Uterus (tissue), 4 donors: ENCODE measurements at regions of chr17 and their contacts with region 1.

Region 1: DNA sequence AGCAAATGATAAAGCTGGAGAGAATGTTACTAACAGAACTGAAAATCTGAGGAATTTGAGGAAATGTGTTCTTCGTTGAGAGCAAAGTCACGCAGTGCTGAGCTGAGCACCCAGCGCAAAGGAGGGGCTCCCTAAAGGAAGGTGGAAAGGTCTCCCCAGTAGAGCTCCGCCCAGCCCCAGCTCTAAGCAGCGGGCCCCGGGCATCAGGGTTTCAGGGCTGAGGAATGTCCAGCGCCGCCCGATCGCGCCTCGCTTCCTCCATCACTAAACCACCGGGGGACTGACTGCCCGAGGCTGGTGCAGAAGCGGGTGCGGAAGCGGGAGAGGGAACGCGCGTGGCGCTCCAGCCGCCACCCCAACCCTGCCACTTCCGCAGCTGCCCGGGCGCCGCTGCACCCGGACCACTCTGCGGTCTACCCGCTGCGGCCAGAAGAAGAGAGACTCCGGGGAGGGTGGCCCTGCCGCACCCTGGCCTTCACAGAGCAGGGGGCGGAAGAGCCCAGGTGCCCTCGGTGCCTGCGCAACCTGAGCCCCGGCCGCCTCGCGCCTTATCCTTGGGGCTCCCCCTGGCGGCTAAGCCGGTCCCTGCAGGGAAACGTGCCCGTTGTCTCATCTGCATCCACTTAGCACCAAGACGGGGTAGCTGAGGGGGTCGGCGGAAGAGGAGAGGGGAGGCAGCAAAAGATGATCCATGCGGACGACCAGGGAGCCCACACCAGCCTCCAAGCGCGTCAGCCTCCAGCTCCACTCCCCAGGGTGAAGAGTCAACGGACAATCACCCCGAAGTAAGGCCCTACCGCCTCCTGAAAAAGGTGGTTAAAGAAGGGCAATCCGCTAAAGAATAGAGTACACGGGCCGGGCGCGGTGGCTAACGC is 12.4 kb upstream of the GUCY2D start:
- DNase-seq: peak; percentile 82 to 87
- H3K4me3 ChIP-seq: peak overlapping the region; percentile 41 to 50
- H3K27ac ChIP-seq: peak overlapping the region; percentile 48 to 63
- H3K4me1 ChIP-seq: no peaks in the 10 kb centered on the region
- H3K27me3 ChIP-seq: no peaks in the 10 kb centered on the region
- CTCF ChIP-seq: peak; percentile 91 to 97 (median 94)
- POLR2A ChIP-seq: peak in 1 of 2 donors; percentile 19

Region 2: DNA sequence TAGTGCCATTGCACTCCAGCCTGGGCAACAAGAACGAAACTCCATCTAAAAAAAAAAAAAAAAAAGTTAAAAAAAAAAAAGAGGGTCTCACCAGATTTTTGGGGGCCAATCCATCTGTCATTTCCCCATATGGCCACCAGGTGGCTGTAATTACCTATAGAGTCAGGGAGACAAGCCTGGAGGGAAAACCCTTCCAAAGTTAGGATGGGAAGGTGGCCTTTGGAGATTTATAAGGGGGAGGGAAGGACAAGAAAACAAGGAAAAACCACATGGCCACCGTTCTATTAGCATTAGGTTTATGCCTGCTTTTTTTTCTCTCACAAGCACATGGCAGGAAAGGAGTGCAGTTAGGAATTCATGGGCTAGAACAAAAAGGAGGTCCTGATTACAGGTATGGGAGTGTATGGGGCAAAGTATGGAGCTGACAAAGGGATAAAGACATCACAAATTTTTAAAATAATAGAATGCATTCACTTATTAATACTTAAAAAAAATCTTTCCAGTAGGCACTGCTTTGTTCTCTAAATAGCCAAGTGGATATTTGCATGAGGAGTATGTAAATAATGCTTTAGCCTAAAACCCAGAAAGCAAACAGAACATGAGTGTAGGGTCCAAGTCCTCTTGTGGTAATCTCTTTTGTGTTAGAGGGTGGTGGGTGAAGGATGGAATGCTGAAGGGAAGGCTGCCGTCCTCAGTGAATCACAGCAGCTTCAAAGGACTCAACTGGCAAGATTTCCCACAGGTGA is 127.2 kb before region 1 on chr17:
- intact Hi-C with region 1: loop called (anchors 10 kb)
- DNase-seq: peak; percentile 55 to 71
- H3K4me3 ChIP-seq: no peak overlapping the region
- H3K27ac ChIP-seq: no peak overlapping the region
- H3K4me1 ChIP-seq: peaks cover 0 to 9% of the 10 kb centered on the region in 2 donors
- H3K27me3 ChIP-seq: no peaks in the 10 kb centered on the region
- CTCF ChIP-seq: peak; percentile 86 to 88 (median 86)
- POLR2A ChIP-seq: no peak

Region 3: DNA sequence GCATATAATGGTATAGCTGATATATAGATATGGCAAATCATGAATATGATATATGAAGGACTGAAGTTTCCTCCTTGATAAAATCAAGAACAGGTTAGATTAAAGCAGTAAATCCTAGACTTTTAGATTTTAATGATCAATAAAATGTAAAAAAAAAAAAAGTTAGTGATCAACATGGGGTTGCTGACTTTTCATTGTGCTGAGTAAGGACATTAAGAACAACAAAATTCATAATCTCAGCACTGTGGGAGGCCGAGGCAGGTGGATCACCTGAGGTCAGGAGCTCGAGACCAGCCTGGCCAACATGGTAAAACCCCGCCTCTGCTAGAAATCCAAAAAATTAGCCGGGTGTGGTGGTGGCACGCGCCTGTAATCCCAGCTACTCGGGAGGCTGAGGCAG is 111.8 kb before region 1 on chr17:
- intact Hi-C with region 1: no loop called
- DNase-seq: no peak
- H3K4me3 ChIP-seq: no peak overlapping the region
- H3K27ac ChIP-seq: no peak overlapping the region
- H3K4me1 ChIP-seq: peaks cover 0 to 4% of the 10 kb centered on the region in 2 donors
- H3K27me3 ChIP-seq: no peaks in the 10 kb centered on the region
- CTCF ChIP-seq: no peak
- POLR2A ChIP-seq: no peak

Region 4: DNA sequence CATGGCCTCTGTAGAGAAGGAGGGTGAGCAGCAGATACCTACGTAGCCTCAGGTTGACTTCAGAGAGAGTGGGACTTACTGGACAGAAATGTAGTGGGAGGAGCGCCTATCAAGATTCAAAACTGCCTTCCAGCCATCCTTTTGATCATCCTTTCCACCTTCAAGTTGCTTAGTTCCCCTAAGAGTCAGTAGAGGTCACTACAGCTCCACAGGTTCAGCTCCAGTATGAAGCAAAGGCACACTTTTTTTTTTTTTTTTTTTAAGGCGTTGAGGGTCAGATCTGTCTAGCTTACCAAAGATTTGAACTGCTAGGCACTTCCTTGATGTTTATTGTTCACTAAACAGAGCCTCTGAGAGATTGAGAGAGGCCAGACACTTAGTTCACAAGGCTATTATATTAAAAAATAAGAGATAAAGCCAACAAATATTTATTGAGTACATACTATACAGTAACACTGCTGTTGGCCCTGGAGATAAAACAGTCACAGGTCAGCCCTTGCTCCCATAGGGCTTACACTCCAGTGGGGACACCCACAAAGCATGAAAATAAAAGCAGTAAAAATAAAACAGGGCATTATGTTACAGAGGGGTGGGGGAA is 77.0 kb before region 1 on chr17:
- intact Hi-C with region 1: loop called (anchors 5 kb)
- DNase-seq: peak in 1 of 2 donors; percentile 63
- H3K4me3 ChIP-seq: no peak overlapping the region
- H3K27ac ChIP-seq: peak overlapping the region; percentile 8 to 50
- H3K4me1 ChIP-seq: peaks cover 0 to 15% of the 10 kb centered on the region in 2 donors
- H3K27me3 ChIP-seq: no peaks in the 10 kb centered on the region
- CTCF ChIP-seq: peak; percentile 61 to 89 (median 76)
- POLR2A ChIP-seq: no peak

Region 5: DNA sequence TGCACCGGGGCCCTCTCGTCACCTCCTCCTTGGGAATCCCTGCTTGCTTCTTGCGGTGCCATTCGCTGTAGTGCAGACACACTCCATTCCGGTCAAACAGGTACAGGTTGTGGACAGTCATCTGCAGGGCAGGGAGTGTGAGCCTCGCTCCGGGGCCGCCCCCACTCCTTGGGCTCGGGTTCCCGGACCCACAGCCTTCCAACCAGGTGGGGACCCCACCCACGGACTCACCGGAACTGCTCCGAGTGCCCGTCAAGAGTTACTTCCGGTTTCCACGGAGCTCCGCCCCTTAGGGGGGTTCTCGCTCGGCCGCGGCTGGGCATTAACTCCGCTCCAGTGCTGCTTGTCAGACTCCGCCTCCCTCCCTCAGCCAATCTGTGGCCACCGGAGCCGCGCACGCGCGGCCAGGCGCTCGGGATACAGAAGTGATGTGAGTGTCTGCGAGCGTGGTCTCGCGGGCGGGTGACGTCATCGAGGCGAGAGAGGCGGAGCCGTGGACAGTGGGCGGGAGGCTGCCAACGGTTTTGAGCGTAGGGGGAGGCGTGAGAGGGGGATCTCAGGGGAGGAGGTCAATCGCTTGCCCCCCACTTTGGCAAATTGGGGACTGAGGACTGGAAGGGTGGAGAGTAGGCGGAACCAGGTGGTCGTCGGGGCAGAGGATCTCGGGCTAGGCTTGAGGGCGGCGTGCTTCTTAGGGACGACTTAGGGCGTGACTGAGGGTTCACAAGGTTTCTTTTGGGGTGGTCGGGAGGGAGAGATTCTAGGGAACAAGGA is 58.1 kb before region 1 on chr17 and contains the starts of genes CNTROB and TRAPPC1:
- intact Hi-C with region 1: no loop called
- DNase-seq: peak; percentile 99 to 100
- H3K4me3 ChIP-seq: peak within 1 kb of the TSS; percentile 70 to 83
- H3K27ac ChIP-seq: peak within 1 kb of the TSS; percentile 86 to 87
- H3K4me1 ChIP-seq: peaks cover 0 to 17% of the 10 kb centered on the region in 2 donors
- H3K27me3 ChIP-seq: no peaks in the 10 kb centered on the region
- CTCF ChIP-seq: peak in 1 of 4 experiments; percentile 19
- POLR2A ChIP-seq: peak; percentile 86 to 93
- total RNA-seq, gene CNTROB: 7.1 to 58.5 (median 26.1) TPM
- total RNA-seq, gene TRAPPC1: 24.1 to 67.5 (median 27.8) TPM